Endothelial cell of umbilical vein (primary cell): ENCODE measurements at regions of chr1 and their contacts with region 1.

Region 1: DNA sequence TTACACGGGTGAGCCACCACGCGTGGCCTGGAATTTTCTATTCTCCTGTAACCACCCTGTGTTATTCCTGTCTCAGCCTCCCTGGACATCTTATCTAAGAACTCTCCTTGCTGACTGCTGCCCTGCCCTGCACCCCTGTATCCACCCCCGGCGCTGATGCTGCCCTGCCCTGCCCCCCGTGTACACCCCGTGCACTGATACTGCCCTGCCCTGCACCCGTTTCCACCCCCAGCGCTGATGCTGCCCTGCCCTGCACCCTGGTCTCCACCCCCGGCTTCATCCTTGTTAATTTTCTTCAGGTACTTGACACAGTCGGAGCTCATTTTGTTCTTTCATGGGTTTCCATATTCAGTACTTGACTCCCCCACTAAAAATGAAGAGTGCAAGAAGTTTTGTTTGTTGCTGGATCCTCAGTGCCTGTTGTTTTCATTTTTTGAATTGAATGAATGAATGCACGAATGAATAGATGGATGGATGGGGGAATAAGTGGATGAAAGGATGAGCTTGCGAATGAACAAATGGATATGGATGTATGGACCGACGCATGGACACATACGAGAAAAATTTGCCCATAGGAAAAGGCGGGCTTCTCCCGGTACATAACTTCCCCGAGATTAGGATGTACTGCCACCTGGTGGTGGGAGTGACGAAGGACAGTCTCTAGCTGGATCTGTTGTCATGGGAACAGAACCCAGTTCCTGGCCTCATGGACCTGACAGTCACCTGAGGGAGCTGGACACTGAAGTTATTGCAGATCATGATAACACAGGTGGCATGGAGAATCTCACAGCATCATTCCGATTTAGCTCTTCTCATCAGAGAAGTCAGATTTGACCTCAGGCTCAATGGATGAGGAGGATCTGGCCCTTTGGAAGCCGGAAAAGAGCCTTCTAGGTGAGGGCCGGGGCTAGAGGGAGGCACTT is 14.9 kb downstream of the AADACL4 start:
- DNase-seq: peak; percentile 84
- H3K4me3 ChIP-seq: no peak overlapping the region
- H3K27ac ChIP-seq: no peak overlapping the region
- H3K4me1 ChIP-seq: no peaks in the 10 kb centered on the region
- H3K27me3 ChIP-seq: peaks cover 0 to 8% of the 10 kb centered on the region in 2 experiments
- CTCF ChIP-seq: peak; percentile 86 to 96
- POLR2A ChIP-seq: no peak

Region 2: GRCh38 chr1:12229835-12230548 is 428.8 kb before region 1 on chr1 and contains the start of gene VPS13D:
- CTCF ChIA-PET with region 1: interaction called, 13 read pairs
- POLR2A ChIA-PET with region 1: no interaction called
- dilution Hi-C with region 1: no loop called
- intact Hi-C with region 1: loop called (anchors 1 kb)
- DNase-seq: peak; percentile 59
- H3K4me3 ChIP-seq: peak within 1 kb of the TSS; percentile 59 to 75 (median 73)
- H3K27ac ChIP-seq: peak within 1 kb of the TSS; percentile 20
- H3K4me1 ChIP-seq: peaks cover 6% of the 10 kb centered on the region
- H3K27me3 ChIP-seq: no peaks in the 10 kb centered on the region
- CTCF ChIP-seq: peak; percentile 91 to 99
- POLR2A ChIP-seq: peak; percentile 68
- total RNA-seq, gene VPS13D: 41.7 and 48.5 TPM in 2 replicates

Region 3: DNA sequence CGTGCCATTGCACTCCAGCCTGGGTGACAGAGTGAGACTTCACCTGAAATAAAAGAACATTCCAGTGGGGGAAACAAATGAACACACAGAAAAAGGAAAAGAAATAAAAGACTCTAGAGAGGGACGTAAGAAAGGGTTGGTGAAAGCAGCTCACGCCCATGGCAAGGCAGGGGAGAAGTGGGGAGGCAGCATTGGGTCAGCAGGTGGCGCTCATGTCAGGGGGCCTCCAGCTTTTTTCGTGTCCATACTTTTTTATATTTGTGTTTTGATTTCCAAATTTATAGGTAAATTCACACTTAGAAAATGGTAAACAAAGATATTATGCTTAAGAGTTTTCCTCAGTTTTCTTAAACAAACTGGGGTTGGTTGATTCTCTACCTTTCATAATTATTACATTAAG is 383.4 kb before region 1 on chr1:
- CTCF ChIA-PET with region 1: interaction called, 165 read pairs
- POLR2A ChIA-PET with region 1: no interaction called
- dilution Hi-C with region 1: no loop called
- intact Hi-C with region 1: loop called (anchors 1 kb)
- DNase-seq: peak; percentile 20
- H3K4me3 ChIP-seq: no peak overlapping the region
- H3K27ac ChIP-seq: no peak overlapping the region
- H3K4me1 ChIP-seq: no peaks in the 10 kb centered on the region
- H3K27me3 ChIP-seq: no peaks in the 10 kb centered on the region
- CTCF ChIP-seq: peak; percentile 69 to 73
- POLR2A ChIP-seq: no peak

Region 4: GRCh38 chr1:12314333-12314903 is 344.4 kb before region 1 on chr1:
- CTCF ChIA-PET with region 1: interaction called, 161 read pairs
- POLR2A ChIA-PET with region 1: no interaction called
- dilution Hi-C with region 1: no loop called
- intact Hi-C with region 1: loop called (anchors 1 kb)
- DNase-seq: peak; percentile 42
- H3K4me3 ChIP-seq: no peak overlapping the region
- H3K27ac ChIP-seq: no peak overlapping the region
- H3K4me1 ChIP-seq: no peaks in the 10 kb centered on the region
- H3K27me3 ChIP-seq: no peaks in the 10 kb centered on the region
- CTCF ChIP-seq: peak; percentile 10 to 19
- POLR2A ChIP-seq: no peak

Region 5: DNA sequence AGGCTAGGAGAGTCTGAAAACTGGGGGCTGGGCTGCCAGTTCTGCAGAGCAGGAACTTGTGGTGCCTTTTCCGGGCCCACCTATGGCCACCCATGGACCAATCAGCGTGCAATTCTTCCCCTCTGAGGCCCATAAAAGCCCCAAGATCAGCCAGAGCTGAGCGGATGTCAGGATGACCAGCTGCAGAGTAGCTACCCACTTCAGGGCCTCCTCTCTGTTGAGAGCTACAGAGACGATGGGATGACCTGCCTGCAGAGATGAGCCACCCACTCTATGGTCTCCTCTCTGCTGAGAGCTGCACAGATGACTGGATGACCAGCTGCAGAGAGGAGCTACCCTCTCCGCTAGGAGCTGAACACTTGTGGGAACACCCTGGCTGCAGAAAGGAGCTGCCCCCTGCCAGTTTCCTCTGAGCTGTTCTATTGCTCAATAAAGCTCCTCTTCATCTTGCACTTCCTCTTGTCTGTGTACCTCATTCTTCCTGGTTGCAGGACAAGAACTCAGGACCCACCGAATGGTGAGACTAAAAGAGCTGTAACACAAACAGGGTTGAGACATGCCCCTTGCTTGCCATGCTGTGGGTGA is 27.8 kb before region 1 on chr1:
- CTCF ChIA-PET with region 1: interaction called, 22 read pairs
- POLR2A ChIA-PET with region 1: interaction called, 6 read pairs
- dilution Hi-C with region 1: no loop called
- intact Hi-C with region 1: no loop called
- DNase-seq: no peak
- H3K4me3 ChIP-seq: no peak overlapping the region
- H3K27ac ChIP-seq: no peak overlapping the region
- H3K4me1 ChIP-seq: peaks cover 8% of the 10 kb centered on the region
- H3K27me3 ChIP-seq: peaks cover 0 to 2% of the 10 kb centered on the region in 2 experiments
- CTCF ChIP-seq: no peak
- POLR2A ChIP-seq: no peak

Region 6: GRCh38 chr1:12677565-12677964 is 18.8 kb after region 1 on chr1:
- CTCF ChIA-PET with region 1: no interaction called
- POLR2A ChIA-PET with region 1: no interaction called
- dilution Hi-C with region 1: no loop called
- intact Hi-C with region 1: no loop called
- DNase-seq: no peak
- H3K4me3 ChIP-seq: no peak overlapping the region
- H3K27ac ChIP-seq: no peak overlapping the region
- H3K4me1 ChIP-seq: no peaks in the 10 kb centered on the region
- H3K27me3 ChIP-seq: no peaks in the 10 kb centered on the region
- CTCF ChIP-seq: no peak
- POLR2A ChIP-seq: no peak

Region 7: GRCh38 chr1:12709091-12709491 is 50.3 kb after region 1 on chr1:
- CTCF ChIA-PET with region 1: no interaction called
- POLR2A ChIA-PET with region 1: no interaction called
- dilution Hi-C with region 1: no loop called
- intact Hi-C with region 1: no loop called
- DNase-seq: no peak
- H3K4me3 ChIP-seq: no peak overlapping the region
- H3K27ac ChIP-seq: no peak overlapping the region
- H3K4me1 ChIP-seq: no peaks in the 10 kb centered on the region
- H3K27me3 ChIP-seq: no peaks in the 10 kb centered on the region
- CTCF ChIP-seq: no peak
- POLR2A ChIP-seq: no peak